ENCODE measurements at regions of chr19 and their contacts with region 1.

Region 1: GRCh38 chr19:57317503-57317902 is 2.8 kb upstream of the ZNF543 start:
- DNase-seq: no peak
- H3K4me3 ChIP-seq: no peak overlapping the region
- H3K4me3 Mint-ChIP-seq: no peak overlapping the region
- H3K27ac ChIP-seq: no peak overlapping the region
- H3K27ac Mint-ChIP-seq: no peak overlapping the region
- H3K4me1 ChIP-seq: peaks cover 22% of the 10 kb centered on the region
- H3K4me1 Mint-ChIP-seq: peaks cover 24 to 29% (median 29%) of the 10 kb centered on the region in 3 donors
- H3K27me3 ChIP-seq: peaks cover 8% of the 10 kb centered on the region
- H3K27me3 Mint-ChIP-seq: peaks cover 14 to 35% of the 10 kb centered on the region in 2 donors

Region 2: GRCh38 chr19:57288373-57288772 is 29.1 kb before region 1 on chr19:
- CTCF ChIA-PET with region 1: no interaction called
- POLR2A ChIA-PET with region 1: interaction called, 11 read pairs
- DNase-seq: no peak
- H3K4me3 ChIP-seq: no peak overlapping the region
- H3K4me3 Mint-ChIP-seq: no peak overlapping the region
- H3K27ac ChIP-seq: no peak overlapping the region
- H3K27ac Mint-ChIP-seq: no peak overlapping the region
- H3K4me1 ChIP-seq: no peaks in the 10 kb centered on the region
- H3K4me1 Mint-ChIP-seq: peaks cover 31 to 44% (median 40%) of the 10 kb centered on the region in 3 donors
- H3K27me3 ChIP-seq: no peaks in the 10 kb centered on the region
- H3K27me3 Mint-ChIP-seq: no peaks in the 10 kb centered on the region

Measured in CD8-positive, alpha-beta memory T cell (primary cell).